ENCODE measurements at regions of chr1 and their contacts with region 1.

Region 1: GRCh38 chr1:67214420-67215174 is 48.3 kb downstream of the IL23R start:
- DNase-seq: no peak
- ATAC-seq: no peak

Region 2: DNA sequence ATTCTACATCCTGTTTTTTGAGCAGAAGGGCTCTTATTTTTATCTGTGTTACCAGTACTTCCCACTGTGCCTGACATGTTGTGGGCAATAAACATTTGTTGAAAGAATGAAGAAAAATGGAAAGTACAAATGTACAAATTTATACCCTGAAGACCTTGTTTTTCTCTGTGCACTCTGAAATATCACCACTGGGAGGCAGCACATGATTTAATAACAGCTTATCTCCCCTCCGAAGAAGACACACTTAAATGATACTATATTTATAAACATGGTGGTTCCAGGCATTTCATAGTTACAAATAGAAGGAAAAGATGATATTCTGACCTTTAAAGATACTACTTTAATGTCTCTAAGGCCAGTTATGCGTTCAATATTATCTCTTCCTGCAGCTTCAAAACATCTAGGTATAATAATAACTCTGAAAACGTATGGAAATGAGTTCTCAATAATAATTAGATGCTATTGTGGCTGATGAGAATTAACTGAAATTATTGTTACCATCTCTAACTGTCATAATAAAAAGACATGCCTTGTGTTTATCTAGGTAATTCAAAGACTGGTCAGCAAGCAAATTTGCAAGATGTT is 449.5 kb before region 1 on chr1:
- intact Hi-C with region 1: loop called (anchors 5 kb)
- DNase-seq: no peak
- ATAC-seq: peak; percentile 68

Region 3: DNA sequence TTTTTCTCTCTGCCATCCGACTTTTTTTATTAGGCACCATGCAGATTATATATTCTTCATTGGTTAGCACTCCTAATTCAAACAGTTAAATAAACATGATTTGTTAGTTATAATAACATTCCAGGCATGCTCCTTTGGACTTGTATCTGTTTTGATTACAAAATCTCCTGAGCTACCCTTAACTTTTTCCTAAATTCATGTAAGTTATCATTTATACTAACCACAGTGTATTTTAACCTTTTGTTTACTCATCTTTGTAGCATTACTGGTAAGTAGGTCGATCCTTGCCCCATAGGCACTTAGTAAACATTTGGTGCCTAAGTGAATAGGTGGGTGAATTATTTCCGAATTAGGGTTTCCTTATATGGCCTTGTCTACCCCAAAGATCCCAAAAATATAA is 246.0 kb before region 1 on chr1:
- intact Hi-C with region 1: no loop called
- DNase-seq: no peak
- ATAC-seq: no peak

Measured in Right ventricle myocardium superior (tissue), 1 donor.